ENCODE measurements at regions of chr15 and their contacts with region 1.

Region 1: GRCh38 chr15:99085413-99086326 is 19.2 kb upstream of the SYNM start:
- DNase-seq: no peak
- CTCF ChIP-seq: no peak

Region 2: DNA sequence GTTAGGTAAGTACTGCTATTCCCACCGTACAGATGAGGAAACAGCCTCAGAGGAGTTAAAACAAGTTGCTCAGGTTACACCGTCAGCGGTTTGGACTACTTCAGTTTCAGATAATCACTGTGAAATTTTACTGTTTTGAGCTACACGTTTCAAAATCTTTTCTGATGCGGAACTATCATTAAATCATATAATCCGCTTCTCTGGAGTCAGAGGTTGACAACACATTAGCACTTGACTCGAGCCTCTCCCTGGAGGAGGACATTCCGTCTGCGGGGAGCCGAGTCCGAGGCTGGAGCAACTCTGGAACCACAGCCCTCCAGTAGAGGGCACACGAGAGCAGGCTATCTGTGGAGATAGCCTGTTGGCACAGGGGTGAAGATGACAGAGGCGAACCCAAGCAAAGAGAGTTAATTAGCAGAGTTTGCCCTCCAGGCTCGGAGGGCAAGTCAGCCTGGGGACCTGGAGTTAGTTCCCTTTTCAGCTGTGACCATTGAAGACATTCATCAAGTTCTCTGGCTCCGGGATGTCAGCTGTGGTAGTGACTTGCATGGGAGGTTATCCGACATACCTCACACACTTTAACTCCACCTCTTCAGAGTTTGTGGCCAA is 306.1 kb before region 1 on chr15:
- in situ Hi-C with region 1: loop called (anchors 10 kb)
- DNase-seq: peak; percentile 66
- CTCF ChIP-seq: peak; percentile 94

Region 3: GRCh38 chr15:98856218-98856907 is 229.3 kb before region 1 on chr15:
- in situ Hi-C with region 1: no loop called
- DNase-seq: no peak
- CTCF ChIP-seq: no peak

Region 4: GRCh38 chr15:99279290-99279689 is 193.6 kb after region 1 on chr15:
- in situ Hi-C with region 1: no loop called
- DNase-seq: no peak
- CTCF ChIP-seq: no peak

Measured in GM13977 (cell line).